KBM-7 (cell line): ENCODE measurements at regions of chr14 and their contacts with region 1.

Region 1: GRCh38 chr14:72893636-72894321 is at the start of gene DPF3:
- DNase-seq: peak; percentile 97

Region 2: DNA sequence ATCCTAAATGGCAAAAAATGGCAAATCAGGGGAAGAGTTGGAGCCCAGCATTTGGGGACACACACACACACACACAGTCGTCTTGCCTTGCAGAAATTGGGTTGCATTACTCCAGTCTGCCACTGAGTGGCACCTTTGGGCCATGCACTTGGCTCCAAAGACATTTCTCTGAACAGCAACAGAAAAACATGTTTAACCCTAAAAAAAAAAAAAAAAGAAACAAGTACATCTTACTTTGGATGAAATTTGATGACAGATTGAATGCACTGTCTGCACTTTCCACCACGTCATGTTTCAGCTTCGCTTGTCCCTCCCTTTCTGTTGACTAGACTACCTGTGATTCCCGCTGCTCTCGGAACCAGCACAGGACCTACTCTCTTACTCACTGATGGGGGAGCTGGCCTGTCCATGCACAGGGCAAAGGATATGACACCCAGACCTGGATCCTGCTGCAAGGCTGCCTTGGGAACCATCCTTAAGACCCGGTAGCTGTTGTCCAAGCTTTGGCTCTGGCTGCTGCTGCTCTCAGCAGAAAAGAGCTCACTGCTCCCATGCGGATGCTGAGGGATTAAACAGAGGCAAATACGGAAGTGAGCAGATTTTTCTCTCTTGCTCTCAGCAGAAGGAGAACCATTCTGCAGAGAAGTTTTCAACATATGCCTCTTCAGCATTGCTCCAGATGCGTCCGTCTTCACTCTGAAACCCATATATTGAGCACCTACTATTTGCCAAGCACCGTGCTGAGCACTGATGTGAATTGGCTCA is 376.7 kb before region 1 on chr14:
- in situ Hi-C with region 1: loop called (anchors 25 kb)
- DNase-seq: peak; percentile 78

Region 3: DNA sequence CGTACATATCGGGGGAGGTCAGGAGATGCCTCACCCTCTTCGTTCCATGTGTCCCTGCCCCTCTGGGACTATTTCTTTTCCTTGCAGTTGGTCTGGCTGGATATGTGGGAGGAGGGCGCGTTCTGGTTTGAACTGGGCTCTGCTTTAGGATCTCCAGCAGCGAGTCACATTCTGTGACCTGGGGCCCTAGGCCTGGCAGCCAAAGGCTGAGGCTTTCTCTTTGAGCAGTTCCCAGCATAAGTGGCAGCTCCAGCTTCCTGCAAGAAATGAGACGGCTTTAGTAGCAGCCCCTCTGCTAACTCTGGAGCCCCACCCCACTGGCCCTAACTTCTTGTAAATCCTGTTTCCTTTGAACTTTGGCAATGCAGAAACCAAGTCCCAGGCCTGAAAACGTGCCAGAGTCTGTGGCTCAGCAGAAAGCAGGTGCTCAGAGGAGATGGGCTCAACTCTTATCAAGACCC is 274.6 kb before region 1 on chr14:
- in situ Hi-C with region 1: no loop called
- DNase-seq: no peak